ENCODE measurements at regions of chr2 and their contacts with region 1.

Region 1: GRCh38 chr2:73176881-73177644 is 25.3 kb upstream of the NOTO start:
- DNase-seq: peak; percentile 90 to 96
- H3K4me3 ChIP-seq: peak overlapping the region; percentile 76
- H3K4me3 Mint-ChIP-seq: peak overlapping the region; percentile 94
- H3K27ac Mint-ChIP-seq: peak overlapping the region; percentile 87
- H3K4me1 ChIP-seq: peaks cover 28% of the 10 kb centered on the region
- H3K4me1 Mint-ChIP-seq: peaks cover 10% of the 10 kb centered on the region
- H3K27me3 ChIP-seq: no peaks in the 10 kb centered on the region
- H3K27me3 Mint-ChIP-seq: peaks cover 6% of the 10 kb centered on the region
- CTCF ChIP-seq: peak; percentile 99

Region 2: GRCh38 chr2:72973566-72974435 is 203.3 kb before region 1 on chr2:
- CTCF ChIA-PET with region 1: interaction called, 14 read pairs
- POLR2A ChIA-PET with region 1: no interaction called
- intact Hi-C with region 1: loop called (anchors 5 kb)
- DNase-seq: peak; percentile 67 to 72
- H3K4me3 ChIP-seq: no peak overlapping the region
- H3K4me3 Mint-ChIP-seq: no peak overlapping the region
- H3K27ac Mint-ChIP-seq: no peak overlapping the region
- H3K4me1 ChIP-seq: no peaks in the 10 kb centered on the region
- H3K4me1 Mint-ChIP-seq: no peaks in the 10 kb centered on the region
- H3K27me3 ChIP-seq: no peaks in the 10 kb centered on the region
- H3K27me3 Mint-ChIP-seq: no peaks in the 10 kb centered on the region
- CTCF ChIP-seq: peak; percentile 87 to 95

Region 3: DNA sequence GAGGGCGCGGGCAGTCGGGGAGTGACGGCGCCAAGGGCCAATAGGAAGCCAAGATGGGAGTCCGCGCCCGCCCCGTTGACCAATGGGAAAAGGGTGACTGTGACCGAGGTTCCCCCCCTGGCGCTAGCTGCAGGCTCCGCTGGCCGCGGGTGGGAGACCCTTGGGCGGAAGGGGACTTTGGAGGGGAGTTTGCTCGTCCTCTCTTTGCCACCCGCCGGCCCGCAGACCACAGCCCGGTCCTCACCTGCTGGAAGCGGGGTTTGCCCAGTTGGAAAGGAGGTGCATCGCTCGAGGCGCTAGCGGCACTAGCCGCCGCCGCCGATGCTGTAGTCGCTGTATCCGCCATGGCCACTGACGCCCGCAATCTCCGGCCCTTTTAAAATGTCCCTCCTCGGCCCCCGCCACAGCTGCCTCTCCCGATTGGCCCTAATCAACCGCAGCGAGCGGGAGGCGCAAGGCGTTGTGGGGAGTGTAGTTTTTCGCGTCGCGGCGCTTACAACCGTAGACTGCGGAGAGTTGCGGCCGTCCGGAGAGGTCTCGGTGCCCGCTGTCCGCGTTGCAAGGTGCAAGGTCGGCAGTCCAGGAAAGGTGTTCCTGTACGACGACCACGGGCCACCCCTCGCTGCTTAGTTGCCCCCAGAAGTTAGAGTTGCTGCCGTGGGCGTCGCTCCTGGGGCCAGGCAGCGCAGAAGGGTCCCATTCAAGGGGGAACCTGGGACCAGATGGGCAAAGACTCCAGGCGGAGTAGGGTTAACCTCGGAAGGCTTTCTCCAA is 105.5 kb before region 1 on chr2 and contains the start of gene SFXN5:
- CTCF ChIA-PET with region 1: interaction called, 5 read pairs
- POLR2A ChIA-PET with region 1: no interaction called
- intact Hi-C with region 1: loop called (anchors 5 kb)
- DNase-seq: peak; percentile 97 to 99
- H3K4me3 ChIP-seq: peak within 1 kb of the TSS; percentile 94
- H3K4me3 Mint-ChIP-seq: peak within 1 kb of the TSS; percentile 78
- H3K27ac Mint-ChIP-seq: peak within 1 kb of the TSS; percentile 91
- H3K4me1 ChIP-seq: 0 out of 2 replicates have a peak, but pooled peaks cover 6% of the 10 kb centered on the region
- H3K4me1 Mint-ChIP-seq: peaks cover 18% of the 10 kb centered on the region
- H3K27me3 ChIP-seq: no peaks in the 10 kb centered on the region
- H3K27me3 Mint-ChIP-seq: no peaks in the 10 kb centered on the region
- CTCF ChIP-seq: peak in 1 of 2 experiments; percentile 38
- total RNA-seq, gene SFXN5: 26.8 and 31.3 TPM in 2 replicates

Region 4: GRCh38 chr2:73112913-73113633 is 64.0 kb before region 1 on chr2 and contains the start of gene RAB11FIP5:
- CTCF ChIA-PET with region 1: interaction called, 10 read pairs
- POLR2A ChIA-PET with region 1: interaction called, 10 read pairs
- intact Hi-C with region 1: no loop called
- DNase-seq: peak; percentile 81 to 91
- H3K4me3 ChIP-seq: peak within 1 kb of the TSS; percentile 92
- H3K4me3 Mint-ChIP-seq: peak within 1 kb of the TSS; percentile 81
- H3K27ac Mint-ChIP-seq: peak within 1 kb of the TSS; percentile 78
- H3K4me1 ChIP-seq: peaks cover 13% of the 10 kb centered on the region
- H3K4me1 Mint-ChIP-seq: peaks cover 15% of the 10 kb centered on the region
- H3K27me3 ChIP-seq: no peaks in the 10 kb centered on the region; the same call in 1 of the 2 replicates
- H3K27me3 Mint-ChIP-seq: no peaks in the 10 kb centered on the region
- CTCF ChIP-seq: no peak
- total RNA-seq, gene RAB11FIP5: 17.3 and 17.4 TPM in 2 replicates

Region 5: GRCh38 chr2:73187549-73187948 is 10.5 kb after region 1 on chr2:
- CTCF ChIA-PET with region 1: interaction called, 57 read pairs
- POLR2A ChIA-PET with region 1: interaction called, 16 read pairs
- intact Hi-C with region 1: loop called (anchors 1 kb)
- DNase-seq: no peak
- H3K4me3 ChIP-seq: no peak overlapping the region
- H3K4me3 Mint-ChIP-seq: no peak overlapping the region
- H3K27ac Mint-ChIP-seq: no peak overlapping the region
- H3K4me1 ChIP-seq: peaks cover 19% of the 10 kb centered on the region
- H3K4me1 Mint-ChIP-seq: peaks cover 19% of the 10 kb centered on the region
- H3K27me3 ChIP-seq: no peaks in the 10 kb centered on the region
- H3K27me3 Mint-ChIP-seq: no peaks in the 10 kb centered on the region
- CTCF ChIP-seq: no peak

Region 6: GRCh38 chr2:73233154-73233931 is 56.3 kb after region 1 on chr2 and contains the start of gene PRADC1:
- CTCF ChIA-PET with region 1: interaction called, 22 read pairs
- POLR2A ChIA-PET with region 1: no interaction called
- intact Hi-C with region 1: no loop called
- DNase-seq: peak; percentile 99 to 100
- H3K4me3 ChIP-seq: peak within 1 kb of the TSS; percentile 78
- H3K4me3 Mint-ChIP-seq: peak within 1 kb of the TSS; percentile 91
- H3K27ac Mint-ChIP-seq: peak within 1 kb of the TSS; percentile 98
- H3K4me1 ChIP-seq: peaks cover 7% of the 10 kb centered on the region; the same call in 1 of the 2 replicates
- H3K4me1 Mint-ChIP-seq: peaks cover 20% of the 10 kb centered on the region
- H3K27me3 ChIP-seq: no peaks in the 10 kb centered on the region
- H3K27me3 Mint-ChIP-seq: no peaks in the 10 kb centered on the region
- CTCF ChIP-seq: no peak
- total RNA-seq, gene PRADC1: 24.1 and 25.4 TPM in 2 replicates

Measured in Caco-2 (cell line).